A549 (cell line): ENCODE measurements at regions of chr15 and their contacts with region 1.

Region 1: DNA sequence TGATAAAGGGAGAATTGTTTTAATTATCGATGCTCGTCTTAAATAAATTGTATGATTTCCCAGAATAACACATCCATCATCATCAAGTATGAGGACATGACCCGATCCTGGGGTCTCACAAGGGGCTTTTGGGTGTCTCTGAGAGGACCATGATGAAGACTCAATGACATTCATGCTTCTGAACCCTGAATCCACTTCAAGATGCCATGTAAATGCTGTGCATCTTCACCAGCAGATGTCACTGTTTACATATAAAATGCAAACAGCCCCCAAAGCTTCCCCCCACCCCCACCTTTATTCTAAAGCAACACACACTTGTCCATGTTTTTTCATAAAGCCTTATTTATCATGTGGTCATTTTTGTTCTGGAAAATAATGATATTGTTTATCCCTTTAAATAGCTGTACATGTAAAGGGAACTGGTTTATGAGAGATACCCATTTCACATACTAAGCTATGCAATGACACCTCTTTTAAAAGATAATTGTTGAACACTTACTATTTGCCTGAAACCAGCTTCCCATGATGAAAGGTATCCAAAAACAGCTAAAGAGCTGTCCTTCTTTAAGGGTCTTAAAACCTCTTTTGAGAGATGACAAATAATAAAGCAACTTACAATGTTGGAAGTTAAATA is 69.7 kb upstream of the UBE3A start:
- DNase-seq: peak; percentile 6 to 29
- ATAC-seq: peak in 1 of 2 experiments; percentile 49; a peak in 1 of 6 replicates
- H3K4me3 ChIP-seq: no peak overlapping the region
- H3K27ac ChIP-seq: no peak overlapping the region
- H3K4me1 ChIP-seq: no peaks in the 10 kb centered on the region
- CTCF ChIP-seq: peak; percentile 50
- EP300 ChIP-seq: no peak
- POLR2A ChIP-seq: no peak
- RAD21 ChIP-seq: peak; percentile 66 to 75; a peak in 4 of 5 replicates

Region 2: DNA sequence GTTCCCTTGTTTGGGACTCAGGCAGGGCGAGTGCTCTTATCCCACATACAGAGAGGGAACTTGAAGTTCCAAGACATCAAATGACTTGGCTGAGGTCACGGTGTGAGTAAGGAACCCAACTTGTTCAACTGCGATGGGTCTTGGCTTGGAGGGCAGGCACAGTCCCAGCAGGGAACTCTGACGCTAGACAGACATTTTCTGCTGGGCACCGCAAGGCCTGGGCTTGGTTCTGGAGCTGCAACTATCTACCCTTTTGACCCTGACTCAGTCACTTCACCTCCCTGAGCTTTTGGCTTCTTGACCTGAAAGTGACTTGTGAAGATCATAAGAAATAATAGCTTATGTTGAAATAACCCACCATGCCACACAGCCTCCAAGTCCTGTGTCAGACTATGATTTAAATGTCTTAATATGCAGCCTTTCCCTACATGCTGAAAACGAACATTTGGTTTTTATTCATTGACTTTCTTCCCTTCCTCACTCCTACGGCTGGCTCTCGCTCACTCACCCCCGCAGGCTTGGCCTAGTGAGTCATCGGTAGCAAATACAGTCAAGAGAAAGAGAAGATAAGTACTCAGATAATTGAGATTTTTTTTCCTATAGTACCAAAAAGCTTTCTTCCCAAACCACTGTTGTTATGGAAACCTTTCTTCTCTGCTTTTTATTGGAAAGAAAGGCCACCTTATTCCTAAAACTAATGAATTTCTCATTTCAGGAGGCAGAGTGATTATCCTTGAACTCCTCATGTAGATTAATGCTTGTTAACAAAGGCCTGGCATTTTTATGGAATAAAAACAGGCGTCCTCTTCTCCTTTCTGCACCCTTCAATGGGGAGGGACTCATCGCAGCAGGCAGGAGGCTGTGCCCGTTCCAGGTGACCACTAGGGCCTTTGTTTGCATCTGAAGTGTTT is 176.3 kb after region 1 on chr15:
- CTCF ChIA-PET with region 1: no interaction called
- POLR2A ChIA-PET with region 1: no interaction called
- DNase-seq: no peak
- ATAC-seq: no peak
- H3K4me3 ChIP-seq: no peak overlapping the region
- H3K27ac ChIP-seq: no peak overlapping the region
- H3K4me1 ChIP-seq: no peaks in the 10 kb centered on the region
- CTCF ChIP-seq: no peak
- EP300 ChIP-seq: no peak
- POLR2A ChIP-seq: no peak
- RAD21 ChIP-seq: no peak

Region 3: DNA sequence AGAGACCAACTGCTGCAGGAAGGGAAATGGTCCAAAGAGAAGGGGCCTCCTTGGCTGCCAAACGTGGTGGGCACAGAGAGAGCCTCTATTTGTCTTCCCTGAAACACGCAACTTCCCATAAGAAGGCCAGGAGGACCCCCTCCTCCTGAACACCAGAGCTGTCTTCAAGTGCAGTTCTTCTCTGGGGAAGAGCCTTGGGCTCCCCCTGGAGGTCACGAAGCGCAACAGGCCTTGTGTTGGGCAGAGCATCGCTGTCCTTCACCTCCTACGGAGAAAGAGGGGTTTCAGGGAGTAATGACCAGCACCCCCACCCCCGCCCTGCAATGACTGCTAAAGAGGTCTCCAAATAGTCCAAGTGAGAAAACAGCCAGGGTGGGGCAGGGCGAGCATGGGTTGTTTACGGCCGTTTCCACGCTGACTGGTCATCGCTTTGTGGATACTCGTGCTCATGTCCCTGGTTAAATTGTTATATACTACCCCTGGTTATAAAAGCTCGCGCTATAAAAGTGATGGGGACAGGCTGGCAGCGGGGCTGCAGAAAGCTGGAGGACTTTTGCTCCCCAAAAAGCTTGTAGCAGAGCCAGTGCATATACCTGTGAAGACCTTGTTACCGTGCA is 752.1 kb after region 1 on chr15:
- CTCF ChIA-PET with region 1: interaction called, 19 read pairs
- POLR2A ChIA-PET with region 1: no interaction called
- DNase-seq: peak; percentile 1 to 31
- ATAC-seq: peak; percentile 78 to 84; a peak in 4 of 6 replicates
- H3K4me3 ChIP-seq: no peak overlapping the region
- H3K27ac ChIP-seq: no peak overlapping the region
- H3K4me1 ChIP-seq: no peaks in the 10 kb centered on the region
- CTCF ChIP-seq: peak; percentile 40; the same call in 2 of the 3 replicates
- EP300 ChIP-seq: no peak
- POLR2A ChIP-seq: no peak
- RAD21 ChIP-seq: peak; percentile 45 to 59; a peak in 4 of 5 replicates